ENCODE measurements at regions of chr12 and their contacts with region 1.

Region 1: GRCh38 chr12:8949342-8950220 is at the start of gene M6PR:
- DNase-seq: peak; percentile 89 to 95 (median 91)
- ATAC-seq: peak; percentile 96
- H3K4me3 ChIP-seq: peak within 1 kb of the TSS; percentile 82 to 83
- H3K27ac ChIP-seq: peak within 1 kb of the TSS; percentile 76 to 98 (median 95)
- H3K4me1 ChIP-seq: peaks cover 25% of the 10 kb centered on the region
- H3K27me3 ChIP-seq: no peaks in the 10 kb centered on the region
- CTCF ChIP-seq: peak; percentile 21 to 63 (median 52)
- POLR2A ChIP-seq: peak; percentile 34 to 88 (median 86)
- total RNA-seq, gene M6PR: 43.8 to 57.3 TPM

Region 2: GRCh38 chr12:8045952-8046944 is 903.3 kb before region 1 on chr12:
- intact Hi-C with region 1: no loop called
- DNase-seq: peak; percentile 75 to 88 (median 84)
- ATAC-seq: peak; percentile 86
- H3K4me3 ChIP-seq: no peak overlapping the region
- H3K27ac ChIP-seq: no peak overlapping the region
- H3K4me1 ChIP-seq: peaks cover 4% of the 10 kb centered on the region
- H3K27me3 ChIP-seq: no peaks in the 10 kb centered on the region
- CTCF ChIP-seq: peak; percentile 64 to 82 (median 71)
- POLR2A ChIP-seq: no peak

Region 3: DNA sequence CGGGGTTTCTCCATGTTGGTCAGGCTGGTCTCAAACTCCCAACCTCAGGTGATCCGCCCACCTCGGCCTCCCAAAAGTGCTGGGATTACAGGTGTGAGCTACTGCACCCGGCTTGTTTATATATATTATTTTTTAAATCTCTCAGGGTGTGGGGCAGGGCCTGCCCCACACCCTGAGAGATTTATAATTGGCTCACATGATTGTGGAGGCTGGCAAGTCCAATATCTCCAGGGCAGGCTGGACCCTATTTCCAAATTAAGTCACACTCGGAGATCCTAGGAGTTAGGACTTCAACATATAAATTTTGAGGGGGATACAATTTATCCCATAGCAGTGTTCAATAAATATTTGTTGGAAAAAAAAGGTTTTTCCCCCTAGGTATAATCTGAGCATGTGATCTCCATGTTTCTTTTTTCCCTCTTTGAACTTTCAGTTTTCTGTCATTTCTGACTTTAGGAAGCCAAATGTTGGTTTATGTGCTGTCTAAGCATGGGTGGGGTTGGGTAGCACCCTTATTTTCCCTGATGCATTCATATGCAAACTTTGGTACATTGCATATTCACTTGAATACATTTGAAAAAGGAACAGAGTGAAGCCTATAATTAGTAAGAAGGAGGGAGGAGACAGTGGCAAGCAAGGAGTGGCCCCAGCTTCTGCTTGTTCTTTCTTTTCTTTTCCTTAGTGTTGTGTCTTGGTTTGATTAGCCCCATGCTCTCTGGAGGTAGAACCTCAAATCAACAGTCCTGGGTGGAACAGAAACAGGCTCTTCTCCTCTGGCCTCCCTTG is 135.8 kb before region 1 on chr12:
- intact Hi-C with region 1: no loop called
- DNase-seq: no peak
- ATAC-seq: no peak
- H3K4me3 ChIP-seq: no peak overlapping the region
- H3K27ac ChIP-seq: no peak overlapping the region
- H3K4me1 ChIP-seq: no peaks in the 10 kb centered on the region
- H3K27me3 ChIP-seq: no peaks in the 10 kb centered on the region
- CTCF ChIP-seq: no peak
- POLR2A ChIP-seq: no peak

Region 4: DNA sequence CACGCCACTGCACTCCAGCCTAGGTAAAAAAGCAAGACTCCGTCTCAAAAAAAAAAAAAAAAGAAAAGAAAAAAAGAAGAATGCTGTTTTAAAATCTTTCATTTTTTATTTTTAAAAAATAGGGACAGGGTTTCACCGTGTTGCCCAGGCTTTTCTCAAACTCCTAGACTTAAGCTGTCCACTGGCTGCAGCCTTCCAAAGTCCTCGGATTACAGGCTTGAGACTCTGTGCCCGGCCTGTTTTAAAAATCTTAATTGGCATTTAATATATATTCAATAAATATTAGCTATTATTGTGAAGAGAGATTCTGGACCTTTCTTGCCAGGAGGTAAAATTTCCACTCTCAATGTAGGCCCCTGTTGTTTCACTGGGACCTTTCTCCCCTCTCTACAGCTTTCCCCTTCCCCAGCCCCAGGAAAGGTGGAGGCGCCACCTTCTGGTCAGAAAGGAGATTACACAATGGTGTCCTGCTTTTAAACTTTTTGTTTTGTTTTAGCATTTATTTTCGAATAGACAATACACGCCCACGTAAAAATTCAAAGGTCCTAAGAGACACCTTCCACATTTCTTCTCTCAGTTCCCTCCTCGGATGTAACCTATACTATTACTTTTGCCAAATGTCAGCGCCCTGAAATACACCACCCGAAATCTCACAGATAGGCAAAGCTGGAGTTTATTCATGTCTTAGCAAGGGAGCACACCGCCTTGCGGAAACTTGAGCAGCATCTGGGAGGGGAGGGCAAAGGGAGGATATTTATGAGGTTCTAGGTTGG is 59.1 kb before region 1 on chr12:
- intact Hi-C with region 1: no loop called
- DNase-seq: peak; percentile 27 to 55 (median 42)
- ATAC-seq: peak; percentile 71
- H3K4me3 ChIP-seq: peak overlapping the region in 1 of 2 donors; percentile 14
- H3K27ac ChIP-seq: no peak overlapping the region
- H3K4me1 ChIP-seq: no peaks in the 10 kb centered on the region
- H3K27me3 ChIP-seq: no peaks in the 10 kb centered on the region
- CTCF ChIP-seq: peak; percentile 66 to 87 (median 80)
- POLR2A ChIP-seq: no peak

Region 5: GRCh38 chr12:9039397-9039977 is 89.9 kb after region 1 on chr12:
- intact Hi-C with region 1: loop called (anchors 10 kb)
- DNase-seq: peak in 2 of 4 donors; percentile 39 to 51
- ATAC-seq: peak; percentile 80
- H3K4me3 ChIP-seq: no peak overlapping the region
- H3K27ac ChIP-seq: no peak overlapping the region
- H3K4me1 ChIP-seq: peaks cover 13% of the 10 kb centered on the region
- H3K27me3 ChIP-seq: no peaks in the 10 kb centered on the region
- CTCF ChIP-seq: peak; percentile 9 to 81 (median 74)
- POLR2A ChIP-seq: no peak

Region 6: GRCh38 chr12:9118158-9118557 is 168.6 kb after region 1 on chr12:
- intact Hi-C with region 1: no loop called
- DNase-seq: peak in 1 of 4 donors; percentile 67
- ATAC-seq: no peak
- H3K4me3 ChIP-seq: no peak overlapping the region
- H3K27ac ChIP-seq: peak overlapping the region in 1 of 4 donors; percentile 59
- H3K4me1 ChIP-seq: peaks cover 8% of the 10 kb centered on the region
- H3K27me3 ChIP-seq: no peaks in the 10 kb centered on the region
- CTCF ChIP-seq: no peak
- POLR2A ChIP-seq: peak in 1 of 3 donors; percentile 11